T-cell (primary cell): ENCODE measurements at regions of chr9 and their contacts with region 1.

Region 1: DNA sequence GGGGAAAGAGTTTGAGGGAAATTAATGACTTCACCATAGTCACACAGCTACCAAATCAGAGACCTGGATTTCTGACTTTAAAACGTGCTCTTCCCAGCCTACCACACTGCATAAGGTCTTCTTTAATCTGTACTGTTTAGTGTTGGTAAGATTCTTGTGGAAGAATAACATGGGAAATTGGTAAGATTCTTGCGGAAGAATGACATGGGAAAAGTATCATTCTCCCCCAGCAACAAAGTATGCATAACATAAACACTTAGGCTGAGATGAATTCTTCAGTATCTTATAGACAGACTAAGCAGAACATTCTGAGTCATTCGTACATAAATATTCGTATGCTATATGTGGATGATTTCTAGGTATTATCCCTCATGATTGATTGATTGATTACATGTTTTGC is 170.4 kb downstream of the FOCAD start:
- DNase-seq: no peak
- ATAC-seq: no peak
- H3K4me3 ChIP-seq: no peak overlapping the region
- H3K4me3 Mint-ChIP-seq: no peak overlapping the region
- H3K27ac ChIP-seq: no peak overlapping the region
- H3K27ac Mint-ChIP-seq: no peak overlapping the region
- H3K4me1 ChIP-seq: no peaks in the 10 kb centered on the region
- H3K4me1 Mint-ChIP-seq: peaks cover 0 to 6% (median 0%) of the 10 kb centered on the region in 3 donors
- H3K27me3 ChIP-seq: no peaks in the 10 kb centered on the region
- H3K27me3 Mint-ChIP-seq: no peaks in the 10 kb centered on the region

Region 2: DNA sequence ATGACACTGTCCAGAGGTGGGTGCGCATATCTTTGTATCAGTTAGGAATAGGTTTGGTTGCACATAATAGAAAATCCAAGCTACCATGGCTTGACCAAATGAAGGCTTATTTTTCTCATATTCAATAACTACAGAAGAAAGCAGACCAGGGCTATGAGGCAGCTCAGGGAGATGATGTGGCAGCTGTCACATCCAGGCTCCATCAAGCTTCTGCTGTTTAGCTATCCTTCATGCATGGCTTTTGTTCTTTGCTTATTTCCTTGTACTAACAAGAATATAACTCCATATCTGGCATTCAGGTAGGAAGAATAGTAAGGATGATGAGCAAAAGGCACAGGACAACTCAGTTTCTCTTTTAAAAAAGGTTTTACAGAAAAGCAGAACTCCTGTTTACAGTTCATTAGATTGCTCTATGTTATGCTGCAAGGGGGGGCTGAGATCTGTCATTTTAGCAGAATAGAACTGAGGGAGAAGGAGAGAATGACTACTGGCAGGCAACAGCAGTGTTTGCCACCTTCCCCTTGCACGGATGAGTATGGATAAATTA is 568.2 kb before region 1 on chr9:
- CTCF ChIA-PET with region 1: no interaction called
- POLR2A ChIA-PET with region 1: interaction called in 1 of 2 experiments, 11 read pairs
- DNase-seq: no peak
- ATAC-seq: no peak
- H3K4me3 ChIP-seq: no peak overlapping the region
- H3K4me3 Mint-ChIP-seq: peak overlapping the region in 1 of 3 donors; percentile 3
- H3K27ac ChIP-seq: no peak overlapping the region
- H3K27ac Mint-ChIP-seq: peak overlapping the region; percentile 33 to 74
- H3K4me1 ChIP-seq: peaks cover 3 to 5% of the 10 kb centered on the region in 2 experiments
- H3K4me1 Mint-ChIP-seq: peaks cover 28 to 32% (median 28%) of the 10 kb centered on the region in 3 donors
- H3K27me3 ChIP-seq: no peaks in the 10 kb centered on the region
- H3K27me3 Mint-ChIP-seq: no peaks in the 10 kb centered on the region

Region 3: GRCh38 chr9:20832775-20833174 is 21.7 kb before region 1 on chr9:
- CTCF ChIA-PET with region 1: no interaction called
- POLR2A ChIA-PET with region 1: no interaction called
- DNase-seq: no peak
- ATAC-seq: no peak
- H3K4me3 ChIP-seq: no peak overlapping the region
- H3K4me3 Mint-ChIP-seq: no peak overlapping the region
- H3K27ac ChIP-seq: no peak overlapping the region
- H3K27ac Mint-ChIP-seq: no peak overlapping the region
- H3K4me1 ChIP-seq: no peaks in the 10 kb centered on the region
- H3K4me1 Mint-ChIP-seq: no peaks in the 10 kb centered on the region
- H3K27me3 ChIP-seq: no peaks in the 10 kb centered on the region
- H3K27me3 Mint-ChIP-seq: no peaks in the 10 kb centered on the region

Region 4: GRCh38 chr9:20898885-20899554 is 44.6 kb after region 1 on chr9:
- CTCF ChIA-PET with region 1: no interaction called
- POLR2A ChIA-PET with region 1: no interaction called
- DNase-seq: no peak
- ATAC-seq: no peak
- H3K4me3 ChIP-seq: no peak overlapping the region
- H3K4me3 Mint-ChIP-seq: no peak overlapping the region
- H3K27ac ChIP-seq: no peak overlapping the region
- H3K27ac Mint-ChIP-seq: no peak overlapping the region
- H3K4me1 ChIP-seq: no peaks in the 10 kb centered on the region
- H3K4me1 Mint-ChIP-seq: no peaks in the 10 kb centered on the region
- H3K27me3 ChIP-seq: no peaks in the 10 kb centered on the region
- H3K27me3 Mint-ChIP-seq: no peaks in the 10 kb centered on the region